ENCODE measurements at regions of chr12 and their contacts with region 1.

Region 1: DNA sequence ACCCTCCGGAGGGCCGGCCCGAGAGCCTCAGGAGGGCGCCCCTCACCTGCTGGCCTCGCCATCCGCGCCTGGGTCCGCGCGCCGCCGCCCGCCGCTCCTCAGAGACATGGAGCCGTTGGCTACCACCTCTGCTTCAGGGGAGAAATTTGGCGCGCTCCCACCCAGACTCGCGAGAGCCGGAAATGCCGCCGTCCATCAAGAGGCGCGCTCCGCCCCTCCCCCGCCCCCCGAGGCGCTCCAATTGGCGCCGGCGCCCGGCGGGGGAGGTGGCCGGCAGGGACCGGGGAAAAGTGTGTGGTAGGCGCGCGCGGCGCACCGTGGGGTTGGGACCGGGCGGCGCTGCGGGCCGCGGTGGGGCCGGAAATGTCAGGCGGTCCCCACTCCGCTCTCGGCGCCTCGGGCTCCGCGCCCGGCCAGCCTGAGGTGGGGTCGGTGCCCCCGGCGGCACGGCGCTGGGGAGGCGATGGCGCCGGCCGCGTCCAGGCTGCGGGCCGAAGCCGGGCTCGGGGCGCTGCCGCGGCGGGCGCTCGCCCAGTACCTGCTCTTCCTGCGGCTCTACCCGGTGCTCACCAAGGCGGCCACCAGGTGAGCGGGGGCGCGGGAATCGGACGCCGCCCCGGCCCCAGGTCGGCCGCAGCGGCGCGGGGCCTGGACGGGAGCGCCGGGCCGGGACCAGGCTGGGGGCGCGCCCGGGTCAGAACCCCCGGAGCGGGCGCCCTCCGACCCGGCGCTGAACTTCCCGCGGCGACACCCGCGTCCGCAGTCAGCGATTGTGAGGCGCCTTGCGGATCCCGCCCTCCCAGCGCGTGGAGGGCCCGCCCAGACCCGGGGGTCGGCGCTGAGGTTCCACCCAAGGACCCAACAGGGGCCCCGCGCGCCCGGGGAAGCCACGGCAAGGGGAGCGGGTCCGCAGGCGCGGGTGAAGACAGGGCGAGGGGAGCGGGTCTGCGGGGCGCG is at the starts of genes POLE and PXMP2:
- DNase-seq: peak; percentile 95 to 98
- H3K4me3 ChIP-seq: peak within 1 kb of the TSS; percentile 93 to 95
- H3K27ac ChIP-seq: peak within 1 kb of the TSS; percentile 79 to 81
- H3K4me1 ChIP-seq: peaks cover 0 to 26% (median 14%) of the 10 kb centered on the region in 4 donors
- H3K27me3 ChIP-seq: no peaks in the 10 kb centered on the region
- CTCF ChIP-seq: peak in 1 of 2 experiments; percentile 6

Region 2: DNA sequence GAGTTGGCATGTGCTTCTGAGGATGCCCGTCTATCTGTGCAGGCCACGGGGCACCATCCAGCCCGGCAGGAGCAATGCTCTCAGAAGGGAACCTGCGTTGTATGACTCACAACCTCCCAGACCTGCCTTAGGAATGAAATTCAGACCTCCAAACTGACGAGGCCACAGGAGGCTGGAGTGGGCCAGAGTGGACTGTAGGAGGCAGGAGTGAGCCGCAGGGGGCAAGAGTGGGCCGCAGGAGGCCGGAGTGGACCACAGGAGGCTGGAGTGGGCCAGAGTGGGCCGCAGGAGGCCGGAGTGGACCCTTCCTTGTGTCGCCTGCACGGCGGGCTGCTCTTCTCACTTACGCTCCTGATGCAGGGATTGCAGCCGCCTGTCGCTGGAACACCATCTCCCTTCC is 208.6 kb before region 1 on chr12:
- intact Hi-C with region 1: no loop called
- DNase-seq: no peak
- H3K4me3 ChIP-seq: no peak overlapping the region
- H3K27ac ChIP-seq: no peak overlapping the region
- H3K4me1 ChIP-seq: no peaks in the 10 kb centered on the region
- H3K27me3 ChIP-seq: peaks cover 0 to 51% of the 10 kb centered on the region in 2 donors
- CTCF ChIP-seq: no peak

Region 3: DNA sequence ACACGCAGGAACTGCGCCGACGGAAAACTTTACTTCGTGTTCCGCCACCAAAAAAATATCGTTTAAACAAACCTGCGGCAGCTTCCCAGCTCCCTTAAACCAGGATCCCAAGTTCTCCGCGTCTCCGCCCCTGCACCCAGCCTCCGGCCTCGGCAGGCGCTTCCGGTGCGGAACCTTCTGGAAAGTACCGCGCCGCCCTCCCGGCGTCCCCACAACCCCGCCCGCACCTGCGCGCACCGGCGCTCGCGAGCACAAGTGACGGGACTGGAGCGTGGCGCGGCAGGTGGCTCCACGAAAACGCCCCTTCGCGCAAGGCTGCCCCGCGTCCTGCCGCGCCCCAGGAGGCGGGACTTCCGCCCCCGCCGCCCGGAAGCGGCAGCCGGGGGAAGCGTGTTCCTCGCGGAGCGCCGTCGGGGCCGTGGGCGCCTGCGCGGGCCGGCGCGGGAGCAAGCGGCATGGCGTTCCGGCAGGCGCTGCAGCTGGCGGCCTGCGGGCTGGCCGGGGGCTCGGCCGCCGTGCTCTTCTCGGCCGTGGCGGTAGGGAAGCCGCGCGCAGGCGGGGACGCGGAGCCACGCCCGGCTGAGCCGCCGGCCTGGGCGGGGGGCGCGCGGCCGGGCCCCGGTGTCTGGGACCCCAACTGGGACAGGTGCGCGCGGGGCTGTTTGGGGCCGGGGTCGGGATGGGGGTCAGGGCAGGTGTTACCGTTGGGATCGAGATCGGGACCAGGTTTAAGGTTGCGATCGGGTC is 23.1 kb after region 1 on chr12 and contains the start of gene PGAM5:
- intact Hi-C with region 1: loop called (anchors 2 kb)
- DNase-seq: peak; percentile 65 to 87
- H3K4me3 ChIP-seq: peak within 1 kb of the TSS; percentile 79 to 97
- H3K27ac ChIP-seq: peak within 1 kb of the TSS; percentile 64 to 72
- H3K4me1 ChIP-seq: peaks cover 0 to 22% (median 16%) of the 10 kb centered on the region in 4 donors
- H3K27me3 ChIP-seq: no peaks in the 10 kb centered on the region
- CTCF ChIP-seq: no peak

Measured in tibial artery (tissue), 4 donors.